Activated T-helper 2 cell treated with anti-CD3 and anti-CD28 coated beads, Interferon-gamma antibody, Interleukin-2, Interleukin-4, amounts not matched to agents 10 μg/mL and 5 μg/mL and 100 μg/mL, durations not matched to agents 14 hours and 24 hours and 36 hours (primary cell): ENCODE measurements at regions of chr11 and their contacts with region 1.

Region 1: DNA sequence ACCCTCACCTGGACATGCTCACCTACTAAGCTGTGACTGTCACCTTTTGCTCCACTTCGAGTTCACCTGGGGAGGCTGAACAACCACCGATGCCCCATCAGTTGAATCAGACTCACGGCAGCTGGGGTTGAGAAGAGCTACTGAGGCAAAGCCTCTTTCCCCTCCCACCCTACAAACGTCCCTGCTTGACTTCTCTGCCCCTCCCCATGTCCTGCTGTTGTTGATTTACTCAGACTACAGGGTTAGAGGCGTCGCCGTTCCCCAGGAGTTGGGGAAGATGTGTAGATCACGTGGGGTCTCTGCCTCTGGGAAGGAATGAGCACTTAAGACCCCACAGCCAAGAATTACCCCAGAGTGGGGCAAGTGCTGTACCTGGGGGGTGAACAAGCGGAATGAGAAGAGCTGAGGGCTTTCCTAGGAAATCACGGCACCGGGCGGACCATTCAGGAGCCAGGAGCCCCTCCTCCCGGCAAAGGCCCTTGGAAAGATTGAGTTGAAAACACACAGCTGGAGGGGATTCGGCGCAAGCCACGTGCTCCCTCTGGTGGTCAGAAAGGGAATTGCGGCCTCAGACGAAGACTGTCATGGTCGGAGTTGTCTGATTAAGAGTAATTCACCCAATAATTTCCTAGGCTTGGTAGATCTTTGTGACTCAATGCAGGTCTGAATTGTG is 7.0 kb downstream of the FXYD2 start:
- DNase-seq: peak; percentile 78
- H3K4me3 Mint-ChIP-seq: peak overlapping the region; percentile 55
- H3K27ac Mint-ChIP-seq: peak overlapping the region; percentile 96
- H3K4me1 Mint-ChIP-seq: peaks cover 56% of the 10 kb centered on the region
- H3K27me3 Mint-ChIP-seq: no peaks in the 10 kb centered on the region

Region 2: GRCh38 chr11:117232092-117232878 is 585.2 kb before region 1 on chr11 and contains the start of gene RNF214:
- intact Hi-C with region 1: loop called (anchors 5 kb)
- DNase-seq: peak; percentile 68
- H3K4me3 Mint-ChIP-seq: peak within 1 kb of the TSS; percentile 98
- H3K27ac Mint-ChIP-seq: peak within 1 kb of the TSS; percentile 100
- H3K4me1 Mint-ChIP-seq: peaks cover 31% of the 10 kb centered on the region
- H3K27me3 Mint-ChIP-seq: no peaks in the 10 kb centered on the region
- total RNA-seq, gene RNF214: 22.7 and 25.8 TPM in 2 replicates

Region 3: GRCh38 chr11:117426269-117426685 is 391.2 kb before region 1 on chr11:
- intact Hi-C with region 1: loop called (anchors 5 kb)
- DNase-seq: peak; percentile 44
- H3K4me3 Mint-ChIP-seq: no peak overlapping the region
- H3K27ac Mint-ChIP-seq: no peak overlapping the region
- H3K4me1 Mint-ChIP-seq: no peaks in the 10 kb centered on the region
- H3K27me3 Mint-ChIP-seq: no peaks in the 10 kb centered on the region

Region 4: DNA sequence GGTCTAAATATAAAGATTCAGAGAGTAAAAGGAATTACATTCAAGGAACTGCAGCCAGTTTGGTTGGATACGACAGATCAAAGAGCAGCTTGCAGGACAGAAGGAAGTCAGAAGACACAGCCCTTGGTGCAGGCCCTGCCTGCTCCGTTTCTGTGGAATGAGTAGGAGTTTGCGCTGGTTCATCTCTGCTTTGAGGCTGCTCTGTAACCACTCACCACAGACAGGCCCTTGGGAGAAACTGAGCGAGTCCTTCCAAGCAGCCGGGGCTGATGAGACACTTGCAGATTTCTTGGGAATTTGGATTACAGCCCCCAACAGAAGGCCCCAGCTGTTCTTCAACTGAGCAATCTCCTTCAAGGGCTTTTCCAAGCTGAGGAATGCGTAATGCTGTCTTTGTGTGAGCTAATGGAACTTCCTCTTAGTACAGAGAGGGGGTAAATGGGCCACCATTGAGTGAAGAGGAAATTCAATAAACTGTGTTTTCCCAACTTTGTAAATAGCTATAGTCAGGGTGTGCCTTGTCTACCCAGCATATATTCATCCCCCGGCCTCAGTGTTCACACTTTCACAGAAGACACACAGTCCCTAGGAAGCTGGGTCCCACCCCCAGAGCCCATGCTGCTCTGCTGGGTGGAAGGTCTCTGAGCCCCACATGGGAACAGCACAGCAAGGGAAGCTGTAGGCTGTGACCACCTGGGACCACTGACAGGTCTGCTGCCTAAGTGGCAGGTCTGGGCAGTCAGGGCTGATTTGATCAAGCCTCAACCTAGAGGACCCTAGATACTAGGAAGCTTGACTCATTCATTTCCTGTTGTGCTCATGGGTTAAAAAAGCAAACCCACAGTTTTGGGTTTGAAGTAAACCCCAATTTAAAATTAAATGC is 185.3 kb after region 1 on chr11:
- intact Hi-C with region 1: loop called (anchors 1 kb)
- DNase-seq: peak; percentile 61
- H3K4me3 Mint-ChIP-seq: peak overlapping the region; percentile 54
- H3K27ac Mint-ChIP-seq: peak overlapping the region; percentile 99
- H3K4me1 Mint-ChIP-seq: peaks cover 85% of the 10 kb centered on the region
- H3K27me3 Mint-ChIP-seq: no peaks in the 10 kb centered on the region

Region 5: GRCh38 chr11:118051611-118052461 is 234.3 kb after region 1 on chr11:
- intact Hi-C with region 1: loop called (anchors 2 kb)
- DNase-seq: peak; percentile 65
- H3K4me3 Mint-ChIP-seq: peak overlapping the region; percentile 5
- H3K27ac Mint-ChIP-seq: peak overlapping the region; percentile 94
- H3K4me1 Mint-ChIP-seq: peaks cover 54% of the 10 kb centered on the region
- H3K27me3 Mint-ChIP-seq: no peaks in the 10 kb centered on the region